ENCODE measurements at regions of chr18 and their contacts with region 1.

Region 1: DNA sequence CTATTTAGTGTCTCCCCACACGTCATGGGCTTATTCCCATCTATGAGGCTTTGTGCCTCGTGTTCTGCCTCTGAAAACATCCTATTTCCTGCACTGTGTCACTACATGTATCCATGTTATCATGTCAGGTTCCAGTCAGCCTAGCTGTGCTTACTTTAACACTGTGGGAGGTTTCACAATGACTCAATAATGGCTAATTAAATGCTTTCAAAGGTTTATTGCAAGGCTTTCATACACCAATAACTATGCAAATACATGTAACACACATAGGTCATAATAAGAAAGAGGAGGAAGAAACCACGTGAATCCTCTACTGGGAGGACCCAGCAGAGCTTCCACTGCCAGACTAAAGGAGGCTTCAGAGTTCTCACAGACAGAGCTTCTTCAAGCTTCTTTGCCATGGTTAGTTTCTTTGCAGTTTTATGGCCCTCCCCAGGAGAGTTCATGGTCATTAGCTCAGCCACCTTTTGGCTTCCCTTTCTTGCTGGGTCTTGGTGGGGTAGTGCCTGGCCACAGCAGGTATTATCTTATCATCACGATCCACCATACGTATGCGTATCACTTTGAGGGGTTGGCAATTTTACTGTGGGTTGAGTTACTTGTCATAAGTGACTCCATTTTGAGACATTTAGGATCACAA is 5.1 kb upstream of the COLEC12 start:
- DNase-seq: peak; percentile 44
- CTCF ChIP-seq: no peak

Region 2: DNA sequence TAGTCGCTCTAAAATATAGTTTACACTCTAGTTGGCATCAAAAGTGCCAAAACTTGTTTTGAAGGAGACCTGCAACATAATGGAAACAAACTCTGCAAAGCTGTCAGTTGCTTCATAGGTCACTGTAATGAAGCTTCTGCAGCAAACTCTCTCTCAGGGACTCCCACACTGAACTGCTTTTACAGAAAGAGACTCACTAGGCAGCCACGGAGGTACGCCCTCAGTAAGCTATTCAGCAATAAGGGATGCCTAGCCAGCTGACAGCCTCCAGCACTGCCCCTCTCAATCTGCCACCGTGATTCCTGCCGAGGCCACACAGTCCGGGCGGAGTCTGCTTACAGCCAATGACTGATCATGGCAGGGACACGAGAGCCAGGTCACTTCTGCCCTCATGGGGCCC is 56.2 kb before region 1 on chr18:
- CTCF ChIA-PET with region 1: no interaction called
- POLR2A ChIA-PET with region 1: no interaction called
- DNase-seq: no peak
- CTCF ChIP-seq: no peak

Region 3: GRCh38 chr18:493986-494983 is 11.3 kb before region 1 on chr18:
- CTCF ChIA-PET with region 1: interaction called, 15 read pairs
- POLR2A ChIA-PET with region 1: no interaction called
- DNase-seq: no peak
- CTCF ChIP-seq: no peak

Region 4: DNA sequence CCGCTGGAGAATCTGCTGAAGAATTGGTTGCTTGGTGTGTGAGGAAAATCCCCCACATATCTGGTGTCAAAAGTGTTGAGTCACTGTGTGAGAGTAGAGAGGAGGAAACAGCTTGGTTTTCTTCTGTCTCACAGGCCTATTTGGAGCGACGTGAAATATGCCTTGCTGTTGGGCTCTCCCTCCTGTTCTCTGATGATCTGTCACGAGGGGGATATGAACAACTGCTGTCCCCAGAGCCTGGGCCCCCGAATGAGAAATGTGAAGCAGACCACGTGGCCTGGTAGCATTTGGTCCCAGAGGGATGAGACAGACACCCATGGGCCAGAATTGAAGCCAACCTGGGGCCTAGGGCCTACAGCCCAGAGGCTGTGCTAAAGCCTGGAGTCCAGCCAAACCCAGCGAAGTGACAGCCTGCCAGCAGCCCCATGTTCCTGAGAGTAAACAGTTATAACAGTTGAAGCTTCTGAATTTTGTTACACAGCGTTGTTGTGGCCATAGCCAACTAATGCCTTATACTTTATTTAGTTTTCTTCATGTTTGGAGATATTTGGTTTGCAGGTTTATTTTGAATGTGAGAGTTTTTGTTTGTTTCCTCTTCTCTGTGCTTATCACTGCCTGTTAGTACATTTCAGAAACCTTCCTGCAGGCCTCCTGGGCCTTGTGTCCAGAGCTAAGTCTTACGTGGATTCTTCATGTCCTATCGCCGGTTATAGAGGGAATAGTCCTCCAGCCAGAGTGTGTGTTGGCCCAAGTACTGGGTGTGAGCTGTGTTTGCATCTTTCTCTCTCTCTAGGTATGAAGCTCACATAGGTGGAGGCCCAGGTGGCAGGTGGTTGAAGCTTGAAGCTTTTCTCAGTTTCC is 13.6 kb after region 1 on chr18:
- CTCF ChIA-PET with region 1: interaction called, 14 read pairs
- POLR2A ChIA-PET with region 1: no interaction called
- DNase-seq: peak; percentile 68
- CTCF ChIP-seq: no peak